Calu3 (cell line): ENCODE measurements at regions of chr3 and their contacts with region 1.

Region 1: DNA sequence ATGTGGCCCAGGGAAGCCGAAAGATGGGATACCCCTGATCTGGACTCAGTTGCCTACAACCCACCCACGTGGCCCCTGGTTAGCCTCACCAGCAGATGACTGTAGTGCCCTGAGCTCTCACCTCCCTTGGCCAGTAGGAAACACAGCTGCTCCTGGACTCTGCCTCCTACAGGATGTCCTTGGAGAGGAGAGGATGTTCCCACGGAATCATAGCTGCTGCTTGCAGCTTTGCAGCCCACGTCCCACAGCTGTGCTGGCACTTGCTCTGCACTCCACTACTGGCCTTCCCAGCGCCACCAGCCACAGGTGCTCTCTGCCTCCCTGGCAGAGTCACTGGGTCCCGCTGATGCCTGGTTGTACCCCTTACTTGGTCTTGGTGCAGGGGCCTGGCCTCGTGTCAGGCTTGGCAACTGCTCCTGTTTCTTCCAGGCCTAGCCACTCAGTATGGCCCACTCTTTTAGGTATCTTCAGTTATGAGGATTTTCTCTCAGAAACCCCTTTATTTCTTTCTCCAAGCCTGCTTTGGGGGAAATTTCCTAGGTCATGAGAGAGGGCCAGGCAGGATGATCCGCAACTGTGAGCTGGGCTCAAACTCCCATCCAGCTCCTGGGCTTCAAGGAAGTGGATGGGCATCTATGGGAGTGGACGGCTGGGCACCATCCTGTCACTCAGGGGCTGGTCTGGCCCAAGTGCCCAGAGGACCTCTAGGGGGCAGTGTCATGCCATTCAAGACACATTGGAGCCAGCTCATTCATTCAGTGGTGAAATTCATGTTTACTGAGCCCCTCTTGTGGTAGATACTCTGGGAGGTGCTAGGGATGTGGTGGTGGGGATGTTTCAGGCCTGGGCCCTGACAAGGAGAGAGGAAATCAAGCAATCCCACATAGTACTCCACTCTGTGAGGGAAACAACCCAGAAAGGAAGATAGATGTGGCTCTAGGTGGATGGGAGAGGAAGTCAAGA is 16.2 kb upstream of the VILL start:
- DNase-seq: peak; percentile 81
- H3K4me3 Mint-ChIP-seq: no peak overlapping the region
- H3K27ac Mint-ChIP-seq: no peak overlapping the region
- H3K4me1 Mint-ChIP-seq: peaks cover 34% of the 10 kb centered on the region
- H3K27me3 Mint-ChIP-seq: no peaks in the 10 kb centered on the region
- CTCF ChIP-seq: peak; percentile 75

Region 2: DNA sequence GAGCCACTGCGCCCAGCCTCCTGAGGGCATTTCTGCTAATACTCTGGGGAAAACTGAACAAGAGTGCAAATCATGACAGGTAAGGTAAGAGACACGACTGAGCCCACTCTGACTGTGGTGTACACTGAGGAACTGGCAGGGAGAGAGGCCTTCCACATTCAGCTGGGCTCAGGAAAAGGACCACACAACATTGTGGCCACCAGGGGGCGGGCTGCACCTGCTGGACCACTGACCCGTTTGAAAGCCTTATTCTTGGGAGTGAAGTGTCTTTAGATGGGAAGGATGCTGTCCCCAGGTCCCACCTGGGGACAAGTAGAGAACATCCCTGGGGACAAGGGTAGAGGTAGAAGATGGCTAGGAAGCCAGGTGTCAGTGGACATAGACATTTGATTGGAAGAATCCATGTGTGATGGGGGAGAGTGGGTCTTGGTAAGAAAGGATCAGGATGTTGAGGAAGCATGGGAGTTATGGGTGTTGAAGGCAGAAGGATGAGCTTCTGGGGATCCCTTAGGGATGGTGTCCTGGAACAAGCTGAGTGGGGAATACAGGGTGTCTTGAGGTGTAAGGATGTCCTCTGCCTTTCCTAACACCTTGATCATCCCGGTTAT is 118.9 kb before region 1 on chr3:
- CTCF ChIA-PET with region 1: interaction called, 12 read pairs
- intact Hi-C with region 1: no loop called
- DNase-seq: peak; percentile 88
- H3K4me3 Mint-ChIP-seq: no peak overlapping the region
- H3K27ac Mint-ChIP-seq: no peak overlapping the region
- H3K4me1 Mint-ChIP-seq: peaks cover 34% of the 10 kb centered on the region
- H3K27me3 Mint-ChIP-seq: no peaks in the 10 kb centered on the region
- CTCF ChIP-seq: peak; percentile 80

Region 3: DNA sequence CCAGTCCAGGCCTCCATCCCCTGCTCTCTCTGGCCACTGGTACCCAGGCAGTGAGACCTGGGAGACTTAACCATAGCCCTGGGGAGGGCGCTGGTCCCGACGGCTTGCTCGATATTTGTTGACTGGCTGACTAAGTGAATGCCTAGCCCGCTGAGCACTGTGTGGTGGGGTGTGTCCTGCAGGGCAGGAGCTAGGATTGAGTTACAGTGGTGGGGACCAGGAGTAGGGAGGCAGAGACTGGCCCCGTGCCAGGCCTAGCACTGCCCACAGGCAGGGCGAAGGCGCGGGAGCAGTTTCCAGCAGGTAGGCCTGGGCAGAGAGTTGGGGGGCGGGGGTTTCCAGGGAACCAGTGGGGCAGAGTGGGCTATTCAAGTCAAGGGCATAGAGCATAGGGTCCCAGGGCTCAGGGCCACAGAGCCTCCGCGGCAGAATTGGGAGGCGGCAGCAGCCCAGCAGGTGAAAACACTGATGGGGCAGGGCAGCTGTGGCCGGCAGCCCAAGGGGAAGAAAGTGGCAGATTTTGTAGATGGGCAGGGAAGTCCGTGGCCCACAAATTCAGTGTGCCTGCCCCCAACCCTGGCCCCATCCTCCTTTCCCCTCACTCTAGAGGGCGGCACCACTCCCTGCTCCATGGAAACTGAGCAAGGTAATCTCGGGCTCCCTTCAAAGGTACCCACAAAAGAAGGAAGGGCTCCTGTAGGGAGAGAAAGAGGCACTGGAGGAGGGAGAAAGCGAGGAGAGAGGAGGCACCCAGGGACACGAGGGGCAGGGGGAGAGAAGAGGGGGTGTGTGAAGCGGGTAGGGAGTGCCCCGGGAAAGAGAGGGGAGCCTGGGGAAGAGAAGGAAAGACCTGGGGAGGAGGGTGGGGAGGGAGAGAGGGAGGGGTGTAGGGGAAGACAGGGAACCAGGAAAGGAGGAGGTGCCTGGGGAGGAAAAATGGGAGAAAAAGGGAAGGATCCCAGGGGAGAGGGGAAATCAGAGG is 16.4 kb after region 1 on chr3 and contains the start of gene VILL:
- CTCF ChIA-PET with region 1: interaction called, 50 read pairs
- intact Hi-C with region 1: no loop called
- DNase-seq: peak; percentile 91
- H3K4me3 Mint-ChIP-seq: peak within 1 kb of the TSS; percentile 87
- H3K27ac Mint-ChIP-seq: peak within 1 kb of the TSS; percentile 85
- H3K4me1 Mint-ChIP-seq: peaks cover 69% of the 10 kb centered on the region
- H3K27me3 Mint-ChIP-seq: no peaks in the 10 kb centered on the region
- CTCF ChIP-seq: peak; percentile 13
- total RNA-seq, gene VILL: 52.6 and 86.8 TPM in 2 replicates

Region 4: DNA sequence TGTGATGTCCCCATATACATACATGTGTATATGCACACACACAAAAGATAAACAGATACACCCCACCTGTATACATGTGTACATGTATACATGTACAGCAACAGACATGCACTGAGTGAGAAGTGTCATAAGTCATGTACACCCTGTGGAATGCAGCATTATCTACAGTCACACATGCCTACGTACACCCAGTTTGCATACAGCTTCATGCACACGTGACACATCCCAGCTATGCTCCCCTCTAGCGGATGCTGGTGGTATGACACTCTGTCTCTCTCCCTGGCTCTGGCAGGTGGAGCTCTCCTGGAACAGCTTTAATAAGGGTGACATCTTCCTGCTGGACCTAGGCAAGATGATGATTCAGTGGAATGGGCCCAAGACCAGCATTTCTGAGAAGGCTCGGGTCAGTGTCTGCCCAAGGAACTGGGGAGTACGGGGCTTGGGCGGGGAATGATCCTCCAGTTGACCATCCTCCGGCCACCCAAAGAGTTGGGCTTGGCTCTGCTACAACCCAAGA is 22.4 kb after region 1 on chr3:
- CTCF ChIA-PET with region 1: interaction called, 50 read pairs
- intact Hi-C with region 1: loop called (anchors 1 kb)
- DNase-seq: peak; percentile 86
- H3K4me3 Mint-ChIP-seq: no peak overlapping the region
- H3K27ac Mint-ChIP-seq: peak overlapping the region; percentile 60
- H3K4me1 Mint-ChIP-seq: peaks cover 38% of the 10 kb centered on the region
- H3K27me3 Mint-ChIP-seq: no peaks in the 10 kb centered on the region
- CTCF ChIP-seq: peak; percentile 87

Region 5: DNA sequence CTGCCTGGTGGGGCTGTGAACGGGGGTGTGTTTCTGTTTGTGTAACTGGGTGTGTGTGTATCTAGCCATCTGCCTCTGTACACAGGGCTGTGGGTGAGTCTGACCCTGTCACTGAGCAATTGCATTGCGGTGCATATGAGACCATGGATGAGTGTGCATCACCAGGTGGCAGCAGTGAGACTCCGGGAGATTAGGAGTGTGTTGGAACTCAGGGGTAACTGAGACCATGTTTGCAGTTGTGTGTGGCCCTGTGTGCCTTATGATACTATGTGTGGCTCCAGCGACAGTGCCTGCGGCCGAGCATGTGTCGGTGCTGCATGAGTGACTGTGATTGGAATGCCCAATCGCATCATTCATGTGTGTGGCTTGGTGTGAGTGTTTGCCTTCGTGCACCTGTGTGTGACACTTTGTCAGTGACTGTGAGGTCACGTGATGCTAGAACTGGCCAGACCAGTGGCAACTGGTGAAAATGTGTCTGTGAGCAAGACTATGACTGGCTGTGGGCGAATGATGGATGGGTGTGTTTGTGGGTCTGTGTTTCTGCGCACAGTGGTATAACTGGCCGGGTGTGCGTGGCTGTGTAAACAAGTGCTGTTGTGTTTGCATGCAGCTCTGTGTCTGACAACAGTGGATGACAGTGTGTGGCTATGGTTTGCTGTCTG is 30.1 kb after region 1 on chr3:
- CTCF ChIA-PET with region 1: interaction called, 16 read pairs
- intact Hi-C with region 1: no loop called
- DNase-seq: peak; percentile 84
- H3K4me3 Mint-ChIP-seq: peak overlapping the region; percentile 54
- H3K27ac Mint-ChIP-seq: peak overlapping the region; percentile 75
- H3K4me1 Mint-ChIP-seq: peaks cover 30% of the 10 kb centered on the region
- H3K27me3 Mint-ChIP-seq: no peaks in the 10 kb centered on the region
- CTCF ChIP-seq: peak; percentile 78